Activated CD4-positive, alpha-beta memory T cell treated with anti-CD3 and anti-CD28 coated beads for 36 hours (primary cell): ENCODE measurements at regions of chr6 and their contacts with region 1.

Region 1: GRCh38 chr6:2111162-2111677 is 134.2 kb downstream of the GMDS start:
- DNase-seq: no peak
- H3K4me3 Mint-ChIP-seq: peak overlapping the region; percentile 61
- H3K27ac Mint-ChIP-seq: peak overlapping the region; percentile 85
- H3K4me1 Mint-ChIP-seq: peaks cover 29% of the 10 kb centered on the region
- H3K27me3 Mint-ChIP-seq: peaks cover 2% of the 10 kb centered on the region

Region 2: GRCh38 chr6:1770968-1771723 is 340.1 kb before region 1 on chr6:
- CTCF ChIA-PET with region 1: no interaction called
- POLR2A ChIA-PET with region 1: no interaction called
- intact Hi-C with region 1: loop called (anchors 2 kb)
- DNase-seq: peak; percentile 67
- H3K4me3 Mint-ChIP-seq: no peak overlapping the region
- H3K27ac Mint-ChIP-seq: no peak overlapping the region
- H3K4me1 Mint-ChIP-seq: peaks cover 42% of the 10 kb centered on the region
- H3K27me3 Mint-ChIP-seq: no peaks in the 10 kb centered on the region

Region 3: GRCh38 chr6:2162089-2162465 is 50.9 kb after region 1 on chr6:
- CTCF ChIA-PET with region 1: interaction called, 3 read pairs
- POLR2A ChIA-PET with region 1: no interaction called
- intact Hi-C with region 1: loop called (anchors 5 kb)
- DNase-seq: no peak
- H3K4me3 Mint-ChIP-seq: no peak overlapping the region
- H3K27ac Mint-ChIP-seq: no peak overlapping the region
- H3K4me1 Mint-ChIP-seq: peaks cover 37% of the 10 kb centered on the region
- H3K27me3 Mint-ChIP-seq: no peaks in the 10 kb centered on the region

Region 4: DNA sequence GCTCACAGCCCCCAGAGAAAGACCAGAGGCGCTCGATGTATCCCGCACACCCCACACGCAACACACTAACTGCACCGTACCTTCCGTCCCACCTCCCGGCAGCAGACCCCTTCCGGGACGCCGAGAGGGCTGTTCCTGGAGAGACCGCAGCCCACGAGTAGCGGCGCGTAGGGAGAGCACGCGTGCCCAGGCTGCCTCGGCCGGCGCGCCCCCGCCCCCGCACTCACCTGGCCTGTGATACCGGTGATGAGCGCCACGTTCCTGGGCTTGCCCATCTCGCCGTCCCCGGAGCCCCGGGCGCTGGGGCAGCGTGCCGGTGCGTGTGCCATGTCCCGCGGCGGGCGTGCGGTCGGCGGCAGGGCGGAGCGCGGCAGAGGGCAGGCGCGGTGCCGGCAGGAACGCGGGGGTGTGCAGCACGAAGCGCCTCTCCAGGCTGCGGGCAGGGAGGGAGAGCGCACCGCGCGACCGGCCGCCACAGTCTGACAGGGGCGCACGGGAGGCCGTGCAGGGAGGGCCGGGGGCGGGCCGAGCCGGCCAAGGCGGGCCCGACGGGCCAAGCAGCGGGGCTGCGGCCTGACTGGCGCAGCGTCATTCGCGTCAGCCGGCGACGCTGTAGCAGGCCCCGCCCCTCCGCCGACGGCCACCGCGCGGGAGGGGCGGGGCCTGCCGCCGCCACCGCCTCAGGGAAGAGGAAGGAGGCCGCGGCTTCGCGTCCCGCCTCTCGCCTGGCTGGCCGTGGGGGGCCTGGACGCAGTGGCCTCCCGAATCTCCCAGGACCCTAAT is 134.1 kb after region 1 on chr6 and contains the start of gene GMDS:
- CTCF ChIA-PET with region 1: interaction called, 3 read pairs
- POLR2A ChIA-PET with region 1: no interaction called
- intact Hi-C with region 1: loop called (anchors 1 kb)
- DNase-seq: peak; percentile 86
- H3K4me3 Mint-ChIP-seq: peak within 1 kb of the TSS; percentile 91
- H3K27ac Mint-ChIP-seq: peak within 1 kb of the TSS; percentile 92
- H3K4me1 Mint-ChIP-seq: peaks cover 58% of the 10 kb centered on the region
- H3K27me3 Mint-ChIP-seq: no peaks in the 10 kb centered on the region
- total RNA-seq, gene GMDS: 34.7 to 36.4 TPM

Region 5: GRCh38 chr6:2378891-2379652 is 267.9 kb after region 1 on chr6:
- CTCF ChIA-PET with region 1: no interaction called
- POLR2A ChIA-PET with region 1: interaction called, 3 read pairs
- intact Hi-C with region 1: loop called (anchors 2 kb)
- DNase-seq: peak; percentile 35
- H3K4me3 Mint-ChIP-seq: no peak overlapping the region
- H3K27ac Mint-ChIP-seq: no peak overlapping the region
- H3K4me1 Mint-ChIP-seq: peaks cover 2% of the 10 kb centered on the region
- H3K27me3 Mint-ChIP-seq: no peaks in the 10 kb centered on the region